ENCODE measurements at regions of chr15 and their contacts with region 1.

Region 1: GRCh38 chr15:72231066-72231846 is at the start of gene PKM:
- DNase-seq: peak; percentile 90 to 95 (median 94)
- H3K4me3 ChIP-seq: peak within 1 kb of the TSS; percentile 91 to 95 (median 95)
- H3K4me3 Mint-ChIP-seq: peak within 1 kb of the TSS; percentile 99
- H3K27ac ChIP-seq: peak within 1 kb of the TSS; percentile 98 to 100
- H3K27ac Mint-ChIP-seq: peak within 1 kb of the TSS; percentile 98 to 100 (median 100)
- H3K4me1 ChIP-seq: peaks cover 61 to 66% of the 10 kb centered on the region in 2 donors
- H3K4me1 Mint-ChIP-seq: peaks cover 60% of the 10 kb centered on the region
- H3K27me3 ChIP-seq: no peaks in the 10 kb centered on the region
- H3K27me3 Mint-ChIP-seq: no peaks in the 10 kb centered on the region
- CTCF ChIP-seq: no peak
- polyA plus RNA-seq, gene PKM: 544 to 999 (median 986) TPM

Region 2: DNA sequence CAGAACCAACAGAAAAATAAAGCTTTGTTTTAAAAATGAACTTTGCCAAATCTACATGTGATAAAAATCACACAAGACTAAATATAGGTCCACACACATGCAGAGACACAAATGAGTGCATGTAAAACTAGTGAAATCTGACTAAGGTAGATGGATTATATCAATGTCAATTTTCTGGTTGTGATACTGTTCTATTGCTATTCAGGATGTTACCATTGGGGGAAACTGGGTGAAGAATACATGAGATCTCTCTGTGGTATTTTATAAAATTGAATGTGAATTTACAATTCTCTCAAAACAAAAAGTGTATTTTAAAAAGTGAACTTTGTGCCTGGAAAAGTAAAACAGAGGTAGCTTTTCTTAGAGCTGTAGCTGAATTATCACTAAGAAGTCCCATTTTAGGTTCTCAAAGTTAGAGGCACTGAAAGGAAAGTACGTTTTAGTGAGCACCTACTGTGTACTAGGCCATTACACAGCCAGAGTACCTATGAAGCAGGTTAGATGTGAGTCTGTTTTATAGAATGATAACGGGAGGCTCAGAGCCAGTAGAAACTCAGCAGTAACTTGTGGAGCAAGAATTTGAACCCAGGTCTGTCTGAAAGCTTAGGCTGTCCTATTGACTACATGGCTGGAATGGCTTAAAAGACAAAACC is 41.9 kb before region 1 on chr15:
- intact Hi-C with region 1: no loop called
- DNase-seq: no peak
- H3K4me3 ChIP-seq: no peak overlapping the region
- H3K4me3 Mint-ChIP-seq: no peak overlapping the region
- H3K27ac ChIP-seq: no peak overlapping the region
- H3K27ac Mint-ChIP-seq: no peak overlapping the region
- H3K4me1 ChIP-seq: no peaks in the 10 kb centered on the region
- H3K4me1 Mint-ChIP-seq: peaks cover 3% of the 10 kb centered on the region
- H3K27me3 ChIP-seq: peaks cover 21 to 34% of the 10 kb centered on the region in 2 donors
- H3K27me3 Mint-ChIP-seq: peaks cover 16 to 29% (median 21%) of the 10 kb centered on the region in 3 donors
- CTCF ChIP-seq: no peak

Region 3: DNA sequence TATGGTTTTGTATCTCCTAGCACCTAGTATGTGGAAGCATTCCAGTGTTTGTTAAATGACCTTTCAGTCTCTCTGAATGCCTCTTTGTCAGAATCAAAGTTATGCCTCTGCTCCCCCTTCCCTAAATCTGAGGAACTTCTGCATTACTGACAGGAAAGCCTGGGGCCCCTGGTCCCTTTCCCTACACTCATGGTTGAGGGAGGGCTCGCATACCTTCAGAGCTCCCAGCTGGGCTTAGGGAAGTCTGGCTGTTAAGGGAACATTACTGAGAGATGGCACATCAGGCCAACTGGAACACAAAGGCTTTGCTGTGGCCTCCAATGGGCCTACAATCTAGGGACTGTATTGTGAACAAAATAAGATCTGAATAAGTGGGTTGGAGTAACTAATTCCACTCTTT is 10.6 kb before region 1 on chr15:
- intact Hi-C with region 1: no loop called
- DNase-seq: peak in 2 of 3 donors; percentile 37 to 42
- H3K4me3 ChIP-seq: peak overlapping the region in 1 of 3 experiments; percentile 26
- H3K4me3 Mint-ChIP-seq: peak overlapping the region; percentile 43 to 61
- H3K27ac ChIP-seq: peak overlapping the region; percentile 45 to 82
- H3K27ac Mint-ChIP-seq: peak overlapping the region; percentile 64 to 95 (median 89)
- H3K4me1 ChIP-seq: peaks cover 47 to 58% of the 10 kb centered on the region in 2 donors
- H3K4me1 Mint-ChIP-seq: peaks cover 50% of the 10 kb centered on the region
- H3K27me3 ChIP-seq: no peaks in the 10 kb centered on the region
- H3K27me3 Mint-ChIP-seq: no peaks in the 10 kb centered on the region
- CTCF ChIP-seq: no peak

Region 4: DNA sequence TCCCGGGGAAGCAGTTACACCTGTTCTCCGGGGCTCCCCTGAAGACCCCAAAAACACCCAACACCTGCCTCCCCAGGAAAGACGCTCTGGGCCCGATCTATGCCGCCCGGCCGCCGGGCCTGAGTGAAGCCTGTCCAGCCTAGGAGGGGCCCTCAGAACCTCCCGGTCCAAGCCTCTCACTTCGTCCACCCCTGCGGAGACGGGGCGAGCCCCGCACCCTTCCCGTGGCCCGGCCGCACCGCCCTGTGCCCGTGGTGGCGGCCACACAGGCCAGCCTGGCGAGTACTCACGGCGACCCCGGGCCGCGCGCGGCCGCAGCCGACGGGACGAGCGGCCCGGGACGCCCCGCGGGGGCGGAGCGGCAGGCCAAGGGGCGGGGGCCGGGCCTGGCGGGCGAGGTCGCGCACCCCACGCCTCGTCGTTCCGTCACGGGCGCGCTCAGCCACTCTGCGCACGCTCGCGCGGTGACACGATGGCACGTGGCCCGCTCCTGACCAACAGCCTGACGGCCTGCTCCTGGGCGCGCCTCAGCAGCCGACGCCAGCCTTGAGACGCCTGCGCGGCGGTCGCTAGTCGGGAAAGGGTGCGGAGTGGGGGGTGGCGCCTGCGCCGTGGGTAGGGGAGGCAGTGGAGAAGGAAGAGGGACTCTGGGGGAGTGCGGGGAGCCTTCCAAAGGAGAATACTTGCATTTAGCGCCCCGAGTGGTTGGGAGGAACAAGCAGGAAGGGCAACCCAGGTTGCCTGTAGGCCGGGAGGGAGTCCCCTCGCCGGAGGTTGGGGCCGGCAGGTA is 41.2 kb after region 1 on chr15 and contains the start of gene PARP6:
- intact Hi-C with region 1: loop called (anchors 1 to 5 kb)
- DNase-seq: peak; percentile 98 to 100 (median 99)
- H3K4me3 ChIP-seq: peak within 1 kb of the TSS; percentile 59 to 81 (median 63)
- H3K4me3 Mint-ChIP-seq: peak within 1 kb of the TSS; percentile 85 to 92
- H3K27ac ChIP-seq: peak within 1 kb of the TSS; percentile 46 to 90
- H3K27ac Mint-ChIP-seq: peak within 1 kb of the TSS; percentile 83 to 93 (median 88)
- H3K4me1 ChIP-seq: peaks cover 15 to 20% of the 10 kb centered on the region in 2 donors
- H3K4me1 Mint-ChIP-seq: peaks cover 27% of the 10 kb centered on the region
- H3K27me3 ChIP-seq: no peaks in the 10 kb centered on the region
- H3K27me3 Mint-ChIP-seq: peaks cover 2 to 7% (median 5%) of the 10 kb centered on the region in 3 donors
- CTCF ChIP-seq: peak; percentile 78
- polyA plus RNA-seq, gene PARP6: 12.9 to 165 (median 13.5) TPM

Region 5: GRCh38 chr15:72369964-72370363 is 138.7 kb after region 1 on chr15:
- intact Hi-C with region 1: loop called in 1 of 2 experiments (anchors 5 kb)
- DNase-seq: peak; percentile 74 to 92 (median 86)
- H3K4me3 ChIP-seq: peak overlapping the region in 1 of 3 experiments; percentile 62
- H3K4me3 Mint-ChIP-seq: peak overlapping the region in 1 of 2 donors; percentile 19
- H3K27ac ChIP-seq: peak overlapping the region; percentile 76 to 85
- H3K27ac Mint-ChIP-seq: peak overlapping the region; percentile 91 to 95 (median 92)
- H3K4me1 ChIP-seq: peaks cover 92 to 98% of the 10 kb centered on the region in 2 donors
- H3K4me1 Mint-ChIP-seq: peaks cover 96% of the 10 kb centered on the region
- H3K27me3 ChIP-seq: no peaks in the 10 kb centered on the region
- H3K27me3 Mint-ChIP-seq: no peaks in the 10 kb centered on the region
- CTCF ChIP-seq: no peak